ENCODE measurements at regions of chr1 and their contacts with region 1.

Region 1: DNA sequence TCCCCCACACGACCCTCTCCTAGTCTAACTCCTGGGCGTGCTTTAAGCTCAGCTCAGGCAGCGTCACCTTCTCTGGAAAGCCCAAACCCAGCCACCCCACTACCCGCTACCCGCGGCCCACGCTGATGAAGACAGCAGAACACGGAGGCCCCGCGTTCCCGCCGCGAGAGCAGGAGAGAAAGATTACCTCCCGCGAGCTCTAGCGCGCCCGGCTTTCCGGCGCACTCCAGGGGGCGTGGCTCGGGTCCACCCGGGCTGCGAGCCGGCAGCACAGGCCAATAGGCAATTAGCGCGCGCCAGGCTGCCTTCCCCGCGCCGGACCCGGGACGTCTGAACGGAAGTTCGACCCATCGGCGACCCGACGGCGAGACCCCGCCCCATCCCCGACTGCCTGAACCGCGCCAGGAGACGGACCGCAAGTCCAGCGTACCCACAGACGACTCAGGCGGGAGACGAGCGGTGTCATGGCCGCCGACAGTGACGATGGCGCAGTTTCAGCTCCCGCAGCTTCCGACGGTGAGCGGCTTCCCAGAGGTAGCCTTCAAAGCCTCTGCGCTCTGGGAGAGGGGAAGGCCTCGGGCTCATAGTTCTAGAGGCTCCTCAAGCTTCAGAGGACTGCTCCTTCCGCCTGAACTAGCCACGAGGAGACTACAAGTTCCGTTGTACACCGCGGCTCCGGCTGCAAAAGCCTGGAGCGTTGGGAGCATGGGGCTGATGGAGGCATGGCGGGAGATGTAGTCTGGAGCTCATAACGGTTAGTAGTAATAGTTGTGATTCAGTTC is at the starts of genes MUTYH and TOE1:
- DNase-seq: peak; percentile 84 to 92 (median 89)
- H3K4me3 ChIP-seq: peak within 1 kb of the TSS; percentile 99
- H3K4me3 Mint-ChIP-seq: peak within 1 kb of the TSS; percentile 99 to 100 (median 100)
- H3K27ac ChIP-seq: peak within 1 kb of the TSS; percentile 99
- H3K27ac Mint-ChIP-seq: peak within 1 kb of the TSS; percentile 97 to 99 (median 99)
- H3K4me1 ChIP-seq: peaks cover 43% of the 10 kb centered on the region
- H3K4me1 Mint-ChIP-seq: peaks cover 48 to 68% (median 61%) of the 10 kb centered on the region in 3 donors
- H3K27me3 ChIP-seq: no peaks in the 10 kb centered on the region
- H3K27me3 Mint-ChIP-seq: no peaks in the 10 kb centered on the region
- total RNA-seq, gene MUTYH: 70.1 to 75.4 TPM
- total RNA-seq, gene TOE1: 46.4 to 48.9 TPM

Region 2: GRCh38 chr1:45221716-45222115 is 118.3 kb before region 1 on chr1:
- CTCF ChIA-PET with region 1: no interaction called
- POLR2A ChIA-PET with region 1: no interaction called
- DNase-seq: no peak
- H3K4me3 ChIP-seq: no peak overlapping the region
- H3K4me3 Mint-ChIP-seq: no peak overlapping the region
- H3K27ac ChIP-seq: no peak overlapping the region
- H3K27ac Mint-ChIP-seq: no peak overlapping the region
- H3K4me1 ChIP-seq: no peaks in the 10 kb centered on the region
- H3K4me1 Mint-ChIP-seq: no peaks in the 10 kb centered on the region
- H3K27me3 ChIP-seq: no peaks in the 10 kb centered on the region
- H3K27me3 Mint-ChIP-seq: peaks cover 2 to 11% of the 10 kb centered on the region in 2 donors

Region 3: DNA sequence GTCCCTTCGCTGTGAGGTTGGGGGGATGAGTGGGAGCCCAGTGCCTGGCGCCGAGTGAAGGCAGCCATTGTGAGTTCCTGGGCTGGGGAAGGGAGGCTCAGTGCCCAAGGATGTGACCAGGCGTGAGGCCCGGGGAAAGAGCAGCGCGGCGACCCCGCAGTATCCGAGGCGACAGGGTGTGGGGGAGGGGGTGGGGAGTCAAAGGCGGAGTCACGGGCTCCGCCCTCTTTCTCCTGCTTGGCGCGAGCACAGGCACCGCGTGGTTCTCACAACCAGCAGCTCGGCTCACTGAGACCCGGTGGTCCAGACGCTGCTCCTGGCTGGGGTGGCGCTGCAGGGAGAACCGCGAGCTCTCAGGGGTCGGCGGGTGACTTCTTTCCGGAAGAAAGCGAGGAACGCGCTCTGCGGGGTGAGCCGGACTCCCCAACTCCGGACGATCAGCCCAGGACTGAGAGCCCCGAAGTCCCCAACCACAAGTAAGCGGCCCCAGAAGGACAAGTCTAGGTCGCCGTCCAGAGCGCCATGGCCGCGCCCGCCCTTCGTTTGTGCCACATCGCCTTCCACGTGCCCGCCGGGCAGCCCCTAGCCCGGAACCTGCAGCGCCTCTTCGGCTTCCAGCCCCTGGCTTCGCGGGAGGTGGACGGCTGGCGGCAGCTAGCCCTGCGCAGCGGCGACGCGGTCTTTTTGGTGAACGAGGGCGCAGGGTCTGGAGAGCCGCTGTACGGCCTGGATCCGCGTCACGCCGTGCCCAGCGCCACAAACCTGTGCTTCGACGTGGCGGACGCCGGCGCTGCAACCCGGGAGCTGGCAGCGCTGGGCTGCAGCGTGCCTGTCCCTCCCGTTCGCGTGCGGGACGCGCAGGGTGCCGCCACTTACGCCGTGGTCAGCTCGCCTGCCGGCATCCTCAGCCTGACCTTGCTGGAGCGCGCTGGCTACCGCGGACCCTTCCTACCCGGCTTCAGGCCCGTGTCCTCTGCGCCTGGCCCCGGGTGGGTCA is 13.1 kb before region 1 on chr1 and contains the start of gene HPDL:
- CTCF ChIA-PET with region 1: interaction called, 10 read pairs
- POLR2A ChIA-PET with region 1: interaction called, 33 read pairs
- DNase-seq: peak; percentile 28 to 67 (median 44)
- H3K4me3 ChIP-seq: peak within 1 kb of the TSS; percentile 79
- H3K4me3 Mint-ChIP-seq: peak within 1 kb of the TSS; percentile 82 to 90 (median 85)
- H3K27ac ChIP-seq: no peak within 1 kb of the TSS
- H3K27ac Mint-ChIP-seq: peak within 1 kb of the TSS in 4 of 8 donors; percentile 55 to 82 (median 73)
- H3K4me1 ChIP-seq: peaks cover 11% of the 10 kb centered on the region
- H3K4me1 Mint-ChIP-seq: peaks cover 0 to 20% (median 6%) of the 10 kb centered on the region in 3 donors
- H3K27me3 ChIP-seq: no peaks in the 10 kb centered on the region
- H3K27me3 Mint-ChIP-seq: peaks cover 0 to 2% of the 10 kb centered on the region in 2 donors
- total RNA-seq, gene HPDL: 41.5 to 42.4 TPM

Region 4: GRCh38 chr1:45365051-45365450 is 25.1 kb after region 1 on chr1:
- CTCF ChIA-PET with region 1: no interaction called
- POLR2A ChIA-PET with region 1: no interaction called
- DNase-seq: no peak
- H3K4me3 ChIP-seq: no peak overlapping the region
- H3K4me3 Mint-ChIP-seq: no peak overlapping the region
- H3K27ac ChIP-seq: no peak overlapping the region
- H3K27ac Mint-ChIP-seq: no peak overlapping the region
- H3K4me1 ChIP-seq: no peaks in the 10 kb centered on the region
- H3K4me1 Mint-ChIP-seq: peaks cover under 1 to 2% (median 1%) of the 10 kb centered on the region in 3 donors
- H3K27me3 ChIP-seq: no peaks in the 10 kb centered on the region
- H3K27me3 Mint-ChIP-seq: no peaks in the 10 kb centered on the region

Region 5: GRCh38 chr1:45385302-45385701 is 45.3 kb after region 1 on chr1:
- CTCF ChIA-PET with region 1: no interaction called
- POLR2A ChIA-PET with region 1: no interaction called
- DNase-seq: no peak
- H3K4me3 ChIP-seq: no peak overlapping the region
- H3K4me3 Mint-ChIP-seq: no peak overlapping the region
- H3K27ac ChIP-seq: no peak overlapping the region
- H3K27ac Mint-ChIP-seq: no peak overlapping the region
- H3K4me1 ChIP-seq: no peaks in the 10 kb centered on the region
- H3K4me1 Mint-ChIP-seq: no peaks in the 10 kb centered on the region
- H3K27me3 ChIP-seq: no peaks in the 10 kb centered on the region
- H3K27me3 Mint-ChIP-seq: no peaks in the 10 kb centered on the region

Region 6: DNA sequence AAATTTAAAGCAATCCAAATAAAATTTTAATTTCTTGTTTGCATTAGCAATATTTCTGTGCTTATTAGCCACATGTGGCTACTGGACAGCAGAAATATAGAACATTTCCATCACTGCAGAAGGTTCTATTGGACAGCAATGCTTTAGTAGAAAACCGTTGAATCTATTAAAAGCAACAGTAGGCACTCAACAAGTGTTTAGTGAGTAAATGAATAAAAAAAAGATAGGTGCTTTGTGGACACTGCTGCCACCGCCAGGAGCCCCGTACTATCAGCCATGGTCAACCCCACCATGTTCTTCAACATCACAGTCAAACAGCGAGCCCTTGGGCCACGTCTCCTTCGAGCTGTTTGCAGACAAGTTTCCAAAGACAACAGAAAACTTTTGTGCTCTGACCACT is 74.8 kb after region 1 on chr1:
- CTCF ChIA-PET with region 1: no interaction called
- POLR2A ChIA-PET with region 1: no interaction called
- DNase-seq: no peak
- H3K4me3 ChIP-seq: no peak overlapping the region
- H3K4me3 Mint-ChIP-seq: no peak overlapping the region
- H3K27ac ChIP-seq: no peak overlapping the region
- H3K27ac Mint-ChIP-seq: no peak overlapping the region
- H3K4me1 ChIP-seq: no peaks in the 10 kb centered on the region
- H3K4me1 Mint-ChIP-seq: no peaks in the 10 kb centered on the region
- H3K27me3 ChIP-seq: no peaks in the 10 kb centered on the region
- H3K27me3 Mint-ChIP-seq: no peaks in the 10 kb centered on the region

Region 7: GRCh38 chr1:45499415-45499769 is 159.4 kb after region 1 on chr1:
- CTCF ChIA-PET with region 1: interaction called, 5 read pairs
- POLR2A ChIA-PET with region 1: interaction called, 17 read pairs
- DNase-seq: no peak
- H3K4me3 ChIP-seq: peak overlapping the region; percentile 69
- H3K4me3 Mint-ChIP-seq: peak overlapping the region; percentile 93 to 97 (median 94)
- H3K27ac ChIP-seq: peak overlapping the region; percentile 59
- H3K27ac Mint-ChIP-seq: peak overlapping the region; percentile 71 to 97 (median 91)
- H3K4me1 ChIP-seq: peaks cover 15% of the 10 kb centered on the region
- H3K4me1 Mint-ChIP-seq: peaks cover 28 to 36% (median 35%) of the 10 kb centered on the region in 3 donors
- H3K27me3 ChIP-seq: no peaks in the 10 kb centered on the region
- H3K27me3 Mint-ChIP-seq: no peaks in the 10 kb centered on the region

Measured in CD8-positive, alpha-beta memory T cell (primary cell).